Transverse colon (tissue), 4 donors: ENCODE measurements at regions of chr6 and their contacts with region 1.

Region 1: DNA sequence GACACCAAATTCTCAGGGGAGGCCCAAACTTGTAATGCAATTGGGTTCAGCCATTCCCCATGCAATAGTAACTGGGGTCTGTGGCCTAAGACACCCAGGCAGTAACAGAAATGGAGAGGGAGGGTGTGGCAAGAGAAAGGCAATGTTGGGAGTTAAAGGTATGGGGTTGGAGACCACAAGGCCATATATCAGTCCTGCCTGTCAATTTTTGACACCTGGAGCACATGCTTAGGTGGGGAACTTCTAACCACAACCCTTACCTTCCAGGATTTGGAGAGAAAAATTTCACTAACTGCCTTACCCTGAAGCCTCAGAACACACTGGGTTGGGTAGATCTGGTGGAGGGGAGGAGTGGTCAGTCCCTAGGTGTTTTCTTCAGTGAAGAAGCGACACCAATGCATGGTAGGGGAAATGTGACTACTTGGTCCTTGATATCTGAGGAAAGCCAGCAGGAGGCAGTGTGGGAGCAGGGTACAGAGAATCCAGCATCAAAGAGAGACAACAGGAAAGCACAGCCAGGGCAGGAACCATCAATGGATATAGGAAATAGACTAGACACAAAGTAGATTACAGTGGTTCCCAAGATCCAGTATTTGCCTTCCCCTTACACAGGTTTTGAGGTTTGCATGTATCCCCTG is 6.8 kb upstream of the USP49 start:
- DNase-seq: peak; percentile 10
- H3K4me3 ChIP-seq: no peak overlapping the region
- H3K27ac ChIP-seq: no peak overlapping the region
- H3K4me1 ChIP-seq: no peaks in the 10 kb centered on the region
- H3K27me3 ChIP-seq: no peaks in the 10 kb centered on the region
- CTCF ChIP-seq: peak in 1 of 5 experiments; percentile 10
- EP300 ChIP-seq: no peak
- POLR2A ChIP-seq: no peak

Region 2: GRCh38 chr6:41929924-41930323 is 27.9 kb after region 1 on chr6:
- in situ Hi-C with region 1: no loop called
- intact Hi-C with region 1: loop called (anchors 1 kb)
- DNase-seq: no peak
- H3K4me3 ChIP-seq: no peak overlapping the region
- H3K27ac ChIP-seq: no peak overlapping the region
- H3K4me1 ChIP-seq: no peaks in the 10 kb centered on the region
- H3K27me3 ChIP-seq: no peaks in the 10 kb centered on the region
- CTCF ChIP-seq: no peak
- EP300 ChIP-seq: no peak
- POLR2A ChIP-seq: no peak